Endothelial cell of umbilical vein (primary cell): ENCODE measurements at regions of chr20 and their contacts with region 1.

Region 1: GRCh38 chr20:58481481-58482021 is 33.6 kb downstream of the APCDD1L start:
- DNase-seq: peak; percentile 46
- H3K4me3 ChIP-seq: no peak overlapping the region
- H3K27ac ChIP-seq: no peak overlapping the region
- H3K4me1 ChIP-seq: peaks cover 4% of the 10 kb centered on the region
- H3K27me3 ChIP-seq: no peaks in the 10 kb centered on the region
- CTCF ChIP-seq: peak; percentile 74 to 88
- POLR2A ChIP-seq: no peak

Region 2: DNA sequence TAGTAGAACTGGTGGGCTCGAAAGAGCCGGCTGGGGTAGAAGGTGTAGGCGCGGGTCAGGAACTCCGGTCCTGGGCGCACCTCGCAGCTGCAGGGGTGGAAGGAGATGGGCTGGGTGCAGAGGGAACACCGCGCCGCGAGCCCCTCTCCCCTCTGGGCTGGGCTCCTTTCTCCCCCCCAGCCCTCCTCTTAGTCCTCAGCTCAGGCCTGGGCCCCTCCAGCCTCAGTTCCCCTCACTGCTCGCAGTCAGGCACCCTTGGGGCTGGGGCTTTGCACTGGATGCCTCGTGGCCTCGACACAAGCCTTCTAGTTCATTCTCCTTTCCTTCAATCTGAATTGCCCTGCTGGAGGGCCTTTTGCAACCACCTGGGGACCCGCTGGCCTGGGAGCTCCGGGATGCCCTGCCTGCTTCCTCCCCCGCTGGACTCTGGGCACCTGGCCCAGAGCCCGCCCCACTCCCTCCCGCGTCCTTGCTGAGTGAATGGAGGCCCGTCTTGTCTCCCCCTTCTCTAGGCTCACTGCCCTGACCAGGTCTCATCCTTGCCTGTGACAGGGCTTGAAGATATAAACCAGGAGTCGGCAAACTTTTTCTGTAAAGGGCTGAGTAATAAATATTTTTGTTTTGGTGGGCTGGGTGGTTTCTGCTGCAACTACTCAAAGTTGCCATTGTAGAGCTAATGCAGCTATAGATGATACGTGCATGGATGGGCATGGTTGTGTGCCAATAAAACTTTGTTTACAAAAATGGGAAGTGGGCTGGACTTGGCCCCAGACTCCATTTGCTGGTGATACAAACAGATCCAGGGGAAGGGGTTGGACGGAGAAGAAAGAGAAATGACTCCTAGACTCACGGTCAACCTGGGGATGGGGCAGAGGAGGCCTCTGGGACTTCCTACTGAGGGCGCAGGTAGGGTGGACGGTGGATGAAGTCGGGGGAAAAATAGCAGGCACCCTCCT is 13.7 kb before region 1 on chr20:
- CTCF ChIA-PET with region 1: interaction called, 10 read pairs
- POLR2A ChIA-PET with region 1: no interaction called
- dilution Hi-C with region 1: no loop called
- intact Hi-C with region 1: no loop called
- DNase-seq: no peak
- H3K4me3 ChIP-seq: no peak overlapping the region
- H3K27ac ChIP-seq: no peak overlapping the region
- H3K4me1 ChIP-seq: no peaks in the 10 kb centered on the region
- H3K27me3 ChIP-seq: peaks cover 0 to 5% of the 10 kb centered on the region in 2 experiments
- CTCF ChIP-seq: no peak
- POLR2A ChIP-seq: no peak

Region 3: DNA sequence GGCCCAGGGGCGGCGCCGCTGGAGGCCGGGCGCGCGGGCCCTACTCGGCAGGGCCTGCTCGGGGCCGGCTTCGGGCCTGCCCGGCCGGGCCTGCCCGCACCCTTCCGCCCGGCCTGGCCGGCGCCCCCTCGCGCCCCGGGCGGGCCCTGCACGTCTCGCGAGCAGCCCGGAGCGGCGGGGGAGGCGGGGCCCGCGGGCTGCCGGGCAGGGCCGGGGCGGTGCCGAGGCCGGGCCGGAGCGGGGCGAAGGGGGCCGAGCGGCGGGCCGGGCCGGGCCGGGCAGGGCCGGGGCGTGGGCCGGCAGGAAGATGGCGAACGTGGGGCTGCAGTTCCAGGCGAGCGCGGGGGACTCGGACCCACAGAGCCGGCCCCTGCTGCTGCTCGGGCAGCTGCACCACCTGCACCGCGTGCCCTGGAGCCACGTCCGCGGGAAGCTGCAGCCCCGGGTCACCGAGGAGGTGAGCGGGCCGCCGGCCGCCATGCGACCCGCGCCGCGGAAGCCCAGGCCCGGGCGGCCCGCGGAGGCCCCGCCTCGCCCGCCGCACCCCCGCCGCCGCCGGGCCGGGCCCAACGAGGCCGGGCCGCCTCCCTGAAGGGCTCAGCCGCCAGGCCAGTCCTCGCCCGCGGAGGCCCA is 211.2 kb after region 1 on chr20 and contains the start of gene NPEPL1:
- CTCF ChIA-PET with region 1: interaction called, 23 read pairs
- POLR2A ChIA-PET with region 1: no interaction called
- dilution Hi-C with region 1: no loop called
- intact Hi-C with region 1: loop called (anchors 2 kb)
- DNase-seq: peak; percentile 45
- H3K4me3 ChIP-seq: peak within 1 kb of the TSS in 2 of 3 experiments; percentile 27 to 49
- H3K27ac ChIP-seq: peak within 1 kb of the TSS; percentile 79
- H3K4me1 ChIP-seq: peaks cover 14% of the 10 kb centered on the region
- H3K27me3 ChIP-seq: no peaks in the 10 kb centered on the region
- CTCF ChIP-seq: no peak
- POLR2A ChIP-seq: peak; percentile 45
- total RNA-seq, gene NPEPL1: 39.1 and 40.8 TPM in 2 replicates

Region 4: DNA sequence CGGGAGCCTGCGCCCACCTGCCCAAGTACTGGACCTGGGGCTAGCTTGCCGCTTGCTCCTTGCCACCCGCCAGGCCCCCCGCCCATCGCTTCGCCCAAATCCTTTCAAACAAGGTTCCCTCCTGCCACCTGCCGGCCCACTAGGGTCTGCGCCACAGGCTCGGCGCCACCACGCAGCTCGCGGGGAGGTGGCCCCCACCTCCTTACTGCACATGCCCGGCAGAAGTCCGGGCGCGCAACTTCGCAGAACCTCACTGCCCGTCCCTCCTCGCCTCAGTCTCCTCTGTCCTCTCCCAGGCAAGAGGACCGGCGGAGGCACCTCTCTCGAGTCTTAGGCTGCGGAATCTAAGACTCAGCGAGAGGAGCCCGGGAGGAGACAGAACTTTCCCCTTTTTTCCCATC is 357.9 kb after region 1 on chr20:
- CTCF ChIA-PET with region 1: interaction called, 33 read pairs
- POLR2A ChIA-PET with region 1: no interaction called
- dilution Hi-C with region 1: no loop called
- intact Hi-C with region 1: no loop called
- DNase-seq: peak; percentile 21
- H3K4me3 ChIP-seq: no peak overlapping the region
- H3K27ac ChIP-seq: no peak overlapping the region
- H3K4me1 ChIP-seq: no peaks in the 10 kb centered on the region
- H3K27me3 ChIP-seq: peaks cover 34 to 52% of the 10 kb centered on the region in 2 experiments
- CTCF ChIP-seq: peak; percentile 7 to 48
- POLR2A ChIP-seq: no peak

Region 5: GRCh38 chr20:59222253-59223181 is 741.0 kb after region 1 on chr20:
- CTCF ChIA-PET with region 1: interaction called, 10 read pairs
- POLR2A ChIA-PET with region 1: no interaction called
- dilution Hi-C with region 1: no loop called
- intact Hi-C with region 1: loop called (anchors 1 kb)
- DNase-seq: peak; percentile 74
- H3K4me3 ChIP-seq: peak overlapping the region; percentile 42 to 71 (median 61)
- H3K27ac ChIP-seq: no peak overlapping the region
- H3K4me1 ChIP-seq: peaks cover 7% of the 10 kb centered on the region
- H3K27me3 ChIP-seq: peaks cover 20% of the 10 kb centered on the region in 2 experiments
- CTCF ChIP-seq: peak; percentile 96 to 97
- POLR2A ChIP-seq: no peak